ENCODE measurements at regions of chr1 and their contacts with region 1.

Region 1: DNA sequence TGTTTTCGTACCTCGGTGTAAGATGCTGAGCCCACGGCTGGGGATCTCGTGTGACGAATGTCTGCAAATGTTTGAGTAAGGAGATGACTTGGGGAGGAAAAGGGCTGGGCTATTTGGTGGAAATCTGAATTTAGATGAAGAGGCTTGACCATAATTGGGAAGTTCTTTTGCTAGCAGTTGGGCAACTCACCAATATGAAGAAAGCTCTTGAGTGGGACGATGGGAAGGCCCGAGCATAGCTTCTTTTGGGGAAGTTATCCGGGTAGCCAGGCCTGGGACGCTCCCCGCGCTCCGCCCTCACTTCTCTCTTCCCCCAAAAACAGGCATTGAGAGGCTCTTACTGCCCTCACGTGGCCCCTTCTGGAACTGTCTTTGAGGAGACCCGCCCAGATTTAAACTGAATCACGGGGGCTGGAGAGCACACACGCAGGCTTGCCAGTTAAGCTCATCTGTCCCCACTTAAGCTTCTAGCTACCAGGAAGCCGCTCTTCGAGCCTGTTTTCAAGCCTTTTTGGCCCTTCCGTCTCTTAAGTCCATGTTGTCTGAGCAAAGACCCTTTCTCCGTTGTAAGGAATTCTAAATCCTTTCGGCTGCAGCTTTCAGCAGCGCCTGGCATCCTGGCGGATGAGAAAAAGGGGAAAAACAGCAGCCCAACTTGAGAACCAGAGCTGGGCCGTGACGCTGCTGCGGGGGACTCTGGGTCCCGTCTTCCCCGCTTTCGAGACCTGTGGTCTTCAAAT is 93.1 kb downstream of the NID1 start:
- DNase-seq: peak; percentile 85
- H3K4me3 ChIP-seq: peak overlapping the region; percentile 47
- H3K27ac ChIP-seq: peak overlapping the region; percentile 98
- H3K27me3 ChIP-seq: no peaks in the 10 kb centered on the region
- CTCF ChIP-seq: peak; percentile 89

Region 2: GRCh38 chr1:235632506-235633401 is 339.0 kb before region 1 on chr1:
- CTCF ChIA-PET with region 1: interaction called, 10 read pairs
- POLR2A ChIA-PET with region 1: no interaction called
- DNase-seq: no peak
- H3K4me3 ChIP-seq: peak overlapping the region; percentile 51
- H3K27ac ChIP-seq: peak overlapping the region; percentile 24
- H3K27me3 ChIP-seq: no peaks in the 10 kb centered on the region
- CTCF ChIP-seq: no peak; the same call in 1 of the 2 replicates

Region 3: DNA sequence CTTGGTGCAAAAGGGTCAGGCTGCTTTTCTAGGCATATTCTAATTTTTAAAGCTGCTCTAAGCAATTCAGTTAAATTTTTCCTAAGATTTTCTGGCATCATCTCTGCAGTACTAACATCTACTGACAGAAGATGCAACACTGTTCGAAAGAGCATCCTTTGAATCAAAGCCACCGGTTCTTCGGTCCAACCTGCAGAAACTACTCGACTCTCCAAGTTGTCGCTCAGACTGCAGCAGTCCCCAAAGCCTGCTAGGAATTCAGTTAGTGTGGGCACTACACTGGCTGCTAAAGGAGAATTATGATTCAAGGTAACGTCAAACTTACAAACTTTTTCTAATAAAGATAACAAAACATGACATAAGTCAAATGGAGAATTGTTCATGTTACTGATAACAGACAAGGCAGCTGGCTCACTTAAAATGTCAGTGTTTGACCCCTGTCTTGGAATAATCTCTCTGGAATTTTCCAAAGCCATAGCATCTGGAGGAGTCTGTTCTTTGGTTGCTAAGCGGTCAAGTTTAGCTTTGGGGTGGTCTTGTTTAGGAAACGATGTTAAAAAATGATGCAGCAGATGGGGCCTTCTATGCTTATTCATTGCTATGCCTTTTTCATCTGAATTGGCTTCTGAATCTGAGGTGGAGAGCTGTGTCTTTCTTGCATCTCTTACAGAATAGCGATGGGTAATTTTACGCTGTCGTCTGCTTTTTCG is 161.9 kb before region 1 on chr1:
- CTCF ChIA-PET with region 1: interaction called, 18 read pairs
- POLR2A ChIA-PET with region 1: interaction called, 4 read pairs
- DNase-seq: peak; percentile 63
- H3K4me3 ChIP-seq: no peak overlapping the region
- H3K27ac ChIP-seq: no peak overlapping the region
- H3K27me3 ChIP-seq: no peaks in the 10 kb centered on the region
- CTCF ChIP-seq: no peak

Region 4: GRCh38 chr1:235855811-235856429 is 115.8 kb before region 1 on chr1:
- CTCF ChIA-PET with region 1: interaction called, 18 read pairs
- POLR2A ChIA-PET with region 1: no interaction called
- DNase-seq: no peak
- H3K4me3 ChIP-seq: no peak overlapping the region
- H3K27ac ChIP-seq: no peak overlapping the region
- H3K27me3 ChIP-seq: no peaks in the 10 kb centered on the region
- CTCF ChIP-seq: no peak

Region 5: GRCh38 chr1:235917267-235917811 is 54.4 kb before region 1 on chr1:
- CTCF ChIA-PET with region 1: interaction called, 20 read pairs
- POLR2A ChIA-PET with region 1: no interaction called
- DNase-seq: peak; percentile 95
- H3K4me3 ChIP-seq: no peak overlapping the region
- H3K27ac ChIP-seq: peak overlapping the region; percentile 62
- H3K27me3 ChIP-seq: no peaks in the 10 kb centered on the region
- CTCF ChIP-seq: no peak

Region 6: DNA sequence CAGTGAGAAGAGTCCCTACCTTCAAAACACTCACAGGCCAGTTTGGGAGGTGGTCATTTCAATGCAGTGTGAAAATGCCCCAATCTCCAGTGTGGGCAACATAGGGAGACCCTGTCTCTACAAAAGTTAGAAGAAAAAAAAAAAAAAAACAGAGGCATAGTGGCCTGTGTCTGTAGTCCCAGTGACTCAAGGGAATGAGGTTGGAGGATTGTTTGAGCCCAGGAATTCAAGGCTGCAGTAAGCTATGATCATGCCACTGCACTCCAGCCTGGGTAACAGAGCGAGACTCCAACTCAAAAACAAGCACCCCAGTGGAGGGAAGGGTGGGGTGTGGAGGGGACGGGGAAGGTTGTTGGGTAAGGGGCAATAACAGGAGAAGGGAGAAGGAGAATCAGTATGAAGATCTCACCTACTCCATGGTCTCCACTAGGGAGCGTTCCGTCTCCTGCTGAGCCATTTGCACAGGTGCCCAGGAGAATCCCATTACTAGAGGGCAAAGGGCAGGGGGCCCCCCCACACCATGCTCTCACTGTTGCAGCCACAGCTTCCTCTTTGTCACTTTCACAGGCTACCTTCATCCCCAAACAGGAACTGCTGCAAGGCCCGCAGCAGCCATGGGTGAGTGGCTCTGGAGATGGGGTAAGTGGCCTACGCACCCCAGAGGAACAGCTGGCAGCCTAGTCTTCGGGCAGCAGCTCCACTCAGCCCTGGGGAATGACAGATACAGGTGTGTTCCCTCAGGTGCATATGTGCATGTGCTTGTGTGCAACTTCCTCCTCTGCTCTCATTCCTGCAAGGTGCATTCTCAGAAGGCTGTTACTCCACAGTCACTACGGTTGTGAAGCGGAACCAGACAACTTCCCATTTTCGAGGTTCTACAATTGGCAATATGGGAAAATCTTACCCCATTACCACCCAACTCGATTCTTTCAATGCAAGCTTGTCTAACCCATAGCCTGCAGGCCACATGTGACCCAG is 17.1 kb before region 1 on chr1:
- CTCF ChIA-PET with region 1: interaction called, 98 read pairs
- POLR2A ChIA-PET with region 1: interaction called, 3 read pairs
- DNase-seq: no peak
- H3K4me3 ChIP-seq: no peak overlapping the region
- H3K27ac ChIP-seq: no peak overlapping the region
- H3K27me3 ChIP-seq: no peaks in the 10 kb centered on the region
- CTCF ChIP-seq: no peak

Region 7: GRCh38 chr1:236030152-236030933 is 58.6 kb after region 1 on chr1:
- CTCF ChIA-PET with region 1: interaction called, 10 read pairs
- POLR2A ChIA-PET with region 1: interaction called, 4 read pairs
- DNase-seq: peak; percentile 63
- H3K4me3 ChIP-seq: no peak overlapping the region
- H3K27ac ChIP-seq: peak overlapping the region; percentile 58
- H3K27me3 ChIP-seq: no peaks in the 10 kb centered on the region
- CTCF ChIP-seq: no peak

Region 8: GRCh38 chr1:236089046-236089773 is 117.5 kb after region 1 on chr1:
- CTCF ChIA-PET with region 1: no interaction called
- POLR2A ChIA-PET with region 1: no interaction called
- DNase-seq: no peak
- H3K4me3 ChIP-seq: no peak overlapping the region
- H3K27ac ChIP-seq: no peak overlapping the region
- H3K27me3 ChIP-seq: no peaks in the 10 kb centered on the region
- CTCF ChIP-seq: peak; percentile 14; the same call in 1 of the 2 replicates